Psoas muscle (tissue), 8 donors: ENCODE measurements at regions of chr11 and their contacts with region 1.

Region 1: GRCh38 chr11:90434858-90435257 is 212.0 kb upstream of the CHORDC1 start:
- DNase-seq: no peak
- ATAC-seq: no peak
- H3K4me3 ChIP-seq: no peak overlapping the region
- H3K27ac ChIP-seq: no peak overlapping the region
- H3K4me1 ChIP-seq: no peaks in the 10 kb centered on the region
- H3K27me3 ChIP-seq: no peaks in the 10 kb centered on the region
- CTCF ChIP-seq: no peak

Region 2: DNA sequence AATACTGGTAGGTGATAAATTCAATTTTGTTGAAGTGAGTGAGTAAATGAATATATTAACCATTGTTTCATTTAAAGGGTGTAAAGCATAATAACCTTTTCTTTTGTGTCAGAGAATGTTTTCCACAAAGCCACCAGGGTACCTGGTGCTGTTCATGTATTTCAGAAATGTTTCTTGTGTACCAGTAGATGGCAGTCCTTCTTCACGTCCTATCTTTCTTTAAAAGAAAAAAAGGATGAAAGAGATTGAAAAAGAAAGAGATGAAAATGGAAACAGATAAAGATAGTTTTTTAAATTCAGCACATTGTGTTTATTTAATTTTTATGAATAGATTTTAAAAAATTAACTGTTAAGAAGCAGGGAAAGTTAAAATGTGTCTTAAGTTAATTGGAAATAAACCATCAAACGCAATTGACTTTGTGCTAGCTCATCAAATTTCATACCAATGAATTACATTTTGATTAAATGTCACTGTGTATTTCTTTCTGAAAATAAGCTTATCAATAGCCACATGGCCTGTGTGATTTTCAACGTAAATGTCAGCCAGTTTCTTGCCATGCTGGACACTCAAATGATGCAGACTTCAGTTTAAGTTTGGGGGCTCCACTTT is 146.5 kb before region 1 on chr11:
- intact Hi-C with region 1: loop called in 1 of 2 experiments (anchors 10 kb)
- DNase-seq: no peak
- ATAC-seq: no peak
- H3K4me3 ChIP-seq: no peak overlapping the region
- H3K27ac ChIP-seq: no peak overlapping the region
- H3K4me1 ChIP-seq: no peaks in the 10 kb centered on the region
- H3K27me3 ChIP-seq: no peaks in the 10 kb centered on the region
- CTCF ChIP-seq: peak; percentile 55

Region 3: DNA sequence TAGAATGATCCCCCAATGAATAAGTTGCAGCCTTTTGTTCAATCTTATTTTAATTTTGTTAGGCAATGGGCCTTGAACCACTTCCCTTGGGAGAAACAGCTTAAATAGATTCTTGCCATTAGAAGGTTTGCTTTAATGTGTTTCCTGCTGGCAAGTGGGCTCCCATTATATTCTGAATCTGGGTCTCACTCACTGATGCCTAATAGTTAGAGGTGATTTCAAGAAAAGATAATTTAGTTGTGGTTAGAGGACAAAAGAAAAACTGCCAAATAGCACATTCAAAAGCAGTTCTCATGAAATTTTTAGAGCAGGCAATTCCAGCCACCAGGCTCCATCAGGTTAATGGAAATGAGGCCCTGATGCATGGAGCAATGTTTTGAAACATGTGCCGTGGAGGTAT is 150.6 kb after region 1 on chr11:
- intact Hi-C with region 1: no loop called
- DNase-seq: no peak
- ATAC-seq: no peak
- H3K4me3 ChIP-seq: no peak overlapping the region
- H3K27ac ChIP-seq: no peak overlapping the region
- H3K4me1 ChIP-seq: no peaks in the 10 kb centered on the region
- H3K27me3 ChIP-seq: no peaks in the 10 kb centered on the region
- CTCF ChIP-seq: no peak

Region 4: GRCh38 chr11:90766121-90766520 is 331.3 kb after region 1 on chr11:
- intact Hi-C with region 1: no loop called
- DNase-seq: no peak
- ATAC-seq: no peak
- H3K4me3 ChIP-seq: no peak overlapping the region
- H3K27ac ChIP-seq: no peak overlapping the region
- H3K4me1 ChIP-seq: no peaks in the 10 kb centered on the region
- H3K27me3 ChIP-seq: no peaks in the 10 kb centered on the region
- CTCF ChIP-seq: no peak